ENCODE measurements at regions of chr18 and their contacts with region 1.

Region 1: GRCh38 chr18:45275367-45276113 is 339.7 kb upstream of the SLC14A2 start:
- DNase-seq: no peak
- ATAC-seq: no peak
- H3K4me3 ChIP-seq: no peak overlapping the region
- H3K27ac ChIP-seq: no peak overlapping the region
- H3K4me1 ChIP-seq: peaks cover 0 to 11% (median 0%) of the 10 kb centered on the region in 4 donors
- H3K27me3 ChIP-seq: no peaks in the 10 kb centered on the region
- CTCF ChIP-seq: peak; percentile 59 to 73 (median 62)
- POLR2A ChIP-seq: no peak

Region 2: DNA sequence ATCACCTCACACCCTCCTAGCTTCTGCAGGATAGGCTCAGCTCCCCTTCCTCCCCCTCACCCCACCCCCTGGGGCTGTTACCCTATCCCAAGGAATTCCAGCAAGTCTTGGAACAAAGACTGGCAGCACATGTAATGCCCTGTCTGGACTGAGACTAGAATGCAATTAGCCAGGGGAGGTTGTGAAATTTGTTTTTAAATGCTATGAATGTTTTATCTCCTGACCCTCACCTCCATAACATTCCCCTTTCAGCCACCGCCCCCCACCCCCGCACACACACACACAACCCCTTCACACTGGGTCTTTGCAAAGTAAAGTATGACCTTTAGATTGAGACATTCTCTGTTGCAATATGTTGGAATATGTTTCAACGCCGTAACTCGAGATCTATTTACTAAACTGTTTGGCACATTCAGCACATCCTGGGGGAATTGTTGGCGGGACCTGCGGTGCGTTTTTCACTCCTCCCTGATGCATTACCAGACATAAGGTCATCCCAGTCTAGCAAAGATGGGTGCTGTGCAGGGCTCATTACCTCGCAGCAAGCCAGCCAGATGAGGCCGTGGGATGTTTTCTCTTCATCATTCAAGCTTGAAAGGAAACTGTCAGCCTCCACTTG is 49.1 kb after region 1 on chr18:
- intact Hi-C with region 1: loop called in 1 of 2 experiments (anchors 10 kb)
- DNase-seq: peak; percentile 68 to 80 (median 78)
- ATAC-seq: peak; percentile 71 to 87 (median 79)
- H3K4me3 ChIP-seq: peak overlapping the region in 1 of 3 donors; percentile 13
- H3K27ac ChIP-seq: peak overlapping the region; percentile 44 to 73 (median 59)
- H3K4me1 ChIP-seq: peaks cover 0 to 28% (median 18%) of the 10 kb centered on the region in 4 donors
- H3K27me3 ChIP-seq: no peaks in the 10 kb centered on the region
- CTCF ChIP-seq: no peak
- POLR2A ChIP-seq: peak; percentile 61